GM13976 (cell line): ENCODE measurements at regions of chr2 and their contacts with region 1.

Region 1: DNA sequence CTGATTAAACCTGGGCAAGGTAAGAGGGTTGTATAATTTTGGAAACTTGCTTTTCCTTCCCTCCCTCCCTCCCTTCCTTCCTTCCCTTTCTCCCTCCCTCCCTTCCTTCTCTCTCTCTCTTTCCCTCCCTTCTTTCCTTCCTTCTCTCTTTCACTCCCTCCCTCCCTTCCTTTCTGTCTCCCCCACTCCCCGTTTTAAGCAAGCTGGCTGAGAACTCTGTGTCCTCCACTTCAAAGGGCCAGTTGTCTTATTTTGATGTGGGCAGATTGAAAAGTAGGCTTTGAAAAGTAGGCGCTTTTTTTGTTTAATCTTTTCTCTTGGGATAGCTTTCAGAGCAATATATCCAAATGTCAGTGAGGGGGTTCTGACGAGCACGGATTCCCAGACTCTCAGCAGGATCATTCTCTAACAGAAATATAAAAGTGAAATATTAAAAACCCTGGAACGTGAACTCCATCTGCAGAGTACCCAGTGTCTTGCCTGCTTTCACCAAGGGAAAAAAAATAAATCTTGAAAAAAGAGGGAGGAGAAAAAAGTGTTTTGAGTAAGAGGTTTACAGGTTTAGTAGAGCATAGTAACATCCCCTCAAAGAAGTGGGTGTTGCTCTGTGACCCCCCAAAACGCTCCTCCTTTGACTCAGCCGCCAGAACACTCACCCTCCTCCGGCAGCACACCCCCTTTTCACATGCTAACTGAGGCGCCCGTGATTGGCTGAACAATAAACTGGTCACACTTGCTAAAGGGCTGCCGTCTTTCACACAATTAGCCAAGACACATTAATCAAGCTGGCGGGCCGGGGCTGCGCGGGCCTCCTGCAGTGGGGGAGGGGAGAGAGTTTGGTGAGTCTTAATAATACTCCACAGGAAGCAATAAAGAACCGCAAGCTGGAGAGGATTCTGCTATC is 52.2 kb downstream of the CDK15 start:
- DNase-seq: peak; percentile 34
- CTCF ChIP-seq: no peak

Region 2: GRCh38 chr2:201580486-201580885 is 278.0 kb before region 1 on chr2:
- in situ Hi-C with region 1: no loop called
- DNase-seq: no peak
- CTCF ChIP-seq: no peak

Region 3: GRCh38 chr2:202033321-202034248 is 175.1 kb after region 1 on chr2 and contains the start of gene FZD7:
- in situ Hi-C with region 1: no loop called
- DNase-seq: peak; percentile 94
- CTCF ChIP-seq: no peak

Region 4: DNA sequence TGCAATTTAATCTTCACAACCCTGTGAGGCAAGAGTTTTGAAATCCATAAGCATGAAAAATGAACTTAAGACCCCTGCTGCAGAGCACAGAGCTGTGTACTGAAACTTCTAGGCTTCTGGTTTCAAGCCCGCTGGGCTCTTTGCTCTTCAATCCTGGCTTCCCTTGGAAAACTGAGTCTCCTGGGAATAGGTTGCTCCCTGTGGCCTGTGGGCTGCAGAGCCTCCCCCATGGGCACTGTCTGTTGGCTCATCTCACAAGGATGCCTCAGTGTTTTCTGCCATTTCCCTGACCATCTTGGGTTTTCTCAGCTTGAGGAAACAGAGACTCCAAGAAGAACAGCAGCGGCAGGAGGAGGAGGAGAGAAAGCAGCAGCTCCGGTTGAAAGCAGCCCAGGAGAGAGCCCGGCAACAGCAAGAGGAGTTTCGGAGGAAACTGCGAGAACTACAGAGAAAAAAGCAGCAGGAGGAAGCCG is 335.4 kb after region 1 on chr2:
- in situ Hi-C with region 1: loop called (anchors 10 kb)
- DNase-seq: no peak
- CTCF ChIP-seq: no peak